CD14-positive monocyte (primary cell): ENCODE measurements at regions of chr6 and their contacts with region 1.

Region 1: DNA sequence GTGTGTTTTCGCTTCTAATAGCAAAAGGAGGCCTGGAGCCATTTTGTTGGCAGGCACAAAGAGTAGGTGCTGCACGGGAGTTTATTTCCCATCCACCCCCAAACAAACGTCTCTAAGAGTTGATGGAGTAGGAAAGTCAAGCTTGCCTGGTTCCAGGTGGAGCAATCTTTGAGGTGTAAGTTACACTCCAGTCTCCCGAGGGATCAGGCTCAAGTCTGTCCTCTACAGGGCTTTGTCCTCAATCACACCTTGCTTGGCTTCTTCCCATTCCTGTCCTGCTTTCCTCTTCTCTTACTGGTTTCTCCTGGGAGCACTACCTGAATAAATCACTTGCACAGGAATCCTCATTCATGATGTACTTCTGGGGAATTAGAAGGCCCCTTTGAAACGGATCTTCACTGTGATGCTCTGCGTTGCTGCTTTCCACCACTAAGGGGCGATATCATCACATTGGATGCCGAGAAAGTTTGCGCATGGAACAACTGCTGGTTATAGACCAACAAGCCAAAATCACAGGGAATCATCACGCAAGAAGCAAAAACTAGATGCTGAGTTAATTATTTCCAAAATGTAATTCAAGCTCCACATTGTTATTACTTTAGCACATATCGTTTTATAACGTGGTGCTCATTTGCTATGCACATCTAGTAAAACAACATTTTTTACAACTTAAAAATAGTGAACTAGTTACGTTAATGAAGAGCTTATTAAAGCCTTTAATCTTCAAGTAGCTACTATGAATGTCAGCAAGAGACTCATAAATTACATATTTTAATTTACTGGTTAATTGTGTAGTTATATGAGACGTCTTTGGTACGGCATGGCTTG is 156.8 kb downstream of the DNAH8 start:
- DNase-seq: peak in 2 of 3 donors; percentile 6 to 13
- H3K4me3 ChIP-seq: no peak overlapping the region
- H3K4me3 Mint-ChIP-seq: no peak overlapping the region
- H3K27ac ChIP-seq: no peak overlapping the region
- H3K27ac Mint-ChIP-seq: no peak overlapping the region
- H3K4me1 ChIP-seq: peaks cover 9 to 11% of the 10 kb centered on the region in 2 donors
- H3K4me1 Mint-ChIP-seq: peaks cover 11% of the 10 kb centered on the region
- H3K27me3 ChIP-seq: peaks cover 0 to 2% of the 10 kb centered on the region in 2 donors
- H3K27me3 Mint-ChIP-seq: peaks cover 3 to 12% (median 6%) of the 10 kb centered on the region in 3 donors
- CTCF ChIP-seq: peak; percentile 89

Region 2: GRCh38 chr6:39309942-39310531 is 438.1 kb after region 1 on chr6:
- intact Hi-C with region 1: loop called (anchors 2 to 5 kb)
- DNase-seq: peak; percentile 45 to 62 (median 55)
- H3K4me3 ChIP-seq: no peak overlapping the region
- H3K4me3 Mint-ChIP-seq: peak overlapping the region in 1 of 2 donors; percentile 15
- H3K27ac ChIP-seq: no peak overlapping the region
- H3K27ac Mint-ChIP-seq: peak overlapping the region in 3 of 7 donors; percentile 12 to 73 (median 15)
- H3K4me1 ChIP-seq: peaks cover 23 to 24% of the 10 kb centered on the region in 2 donors
- H3K4me1 Mint-ChIP-seq: peaks cover 19% of the 10 kb centered on the region
- H3K27me3 ChIP-seq: peaks cover 34 to 41% of the 10 kb centered on the region in 2 donors
- H3K27me3 Mint-ChIP-seq: peaks cover 41 to 43% (median 41%) of the 10 kb centered on the region in 3 donors
- CTCF ChIP-seq: peak; percentile 94